Adrenal gland (tissue), 19 donors: ENCODE measurements at regions of chr4 and their contacts with region 1.

Region 1: DNA sequence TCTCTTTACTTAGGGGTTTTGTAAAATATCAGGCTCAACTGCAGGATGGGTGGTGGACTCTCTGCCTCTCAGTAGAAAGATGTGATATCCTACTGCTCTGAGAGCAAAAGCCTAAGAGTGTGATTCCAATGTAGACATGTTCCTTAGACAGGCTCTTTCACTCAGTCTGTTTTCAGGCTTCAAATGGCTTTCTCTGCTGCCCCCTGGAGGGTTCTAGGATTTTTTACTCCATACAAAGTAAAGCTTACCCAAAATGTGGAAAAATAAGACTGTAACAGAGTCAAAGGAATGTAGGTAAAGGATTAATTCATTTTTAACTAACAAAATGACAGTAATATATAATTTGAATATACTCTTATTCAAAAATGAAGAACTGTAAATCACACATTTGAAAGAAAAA is 32.1 kb downstream of the ZGRF1 start:
- DNase-seq: peak; percentile 33 to 75 (median 56)
- H3K4me3 ChIP-seq: no peak overlapping the region
- H3K27ac ChIP-seq: no peak overlapping the region
- H3K4me1 ChIP-seq: no peaks in the 10 kb centered on the region
- H3K27me3 ChIP-seq: no peaks in the 10 kb centered on the region
- CTCF ChIP-seq: peak; percentile 40 to 66 (median 49)
- POLR2A ChIP-seq: no peak

Region 2: GRCh38 chr4:112327965-112328733 is 276.4 kb before region 1 on chr4:
- intact Hi-C with region 1: loop called (anchors 5 to 10 kb)
- DNase-seq: no peak
- H3K4me3 ChIP-seq: no peak overlapping the region
- H3K27ac ChIP-seq: no peak overlapping the region
- H3K4me1 ChIP-seq: no peaks in the 10 kb centered on the region
- H3K27me3 ChIP-seq: no peaks in the 10 kb centered on the region
- CTCF ChIP-seq: peak in 5 of 6 experiments; percentile 13 to 54 (median 48)
- POLR2A ChIP-seq: no peak

Region 3: DNA sequence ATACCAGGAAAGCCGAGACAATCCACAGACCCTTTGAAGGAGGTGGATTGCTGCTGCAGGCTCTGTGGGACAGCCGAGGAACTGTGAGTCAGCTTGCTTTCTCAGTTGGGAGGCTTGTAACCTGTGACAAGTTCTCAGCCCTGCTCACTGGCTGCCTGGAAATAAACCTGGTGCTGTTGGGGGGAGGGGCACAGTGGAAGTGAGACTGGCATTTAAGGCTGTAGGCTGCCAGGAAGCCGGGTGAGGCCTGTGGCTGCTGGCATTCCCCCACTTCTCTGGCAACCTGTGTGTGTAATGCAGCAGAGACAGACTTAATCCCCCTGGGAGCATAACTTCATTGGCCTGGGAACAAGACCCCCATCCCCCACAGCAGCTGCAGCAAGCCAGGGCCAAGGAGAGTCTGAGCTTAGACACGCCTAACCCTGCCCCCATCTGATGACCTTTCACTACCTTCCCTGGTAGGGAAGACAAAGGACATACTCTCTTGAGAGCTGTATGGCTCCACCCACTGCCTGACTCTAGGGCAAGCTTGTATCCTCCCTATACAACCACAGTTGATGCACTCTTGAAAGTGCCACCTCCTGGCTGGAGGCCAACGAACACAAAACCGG is 243.3 kb before region 1 on chr4:
- intact Hi-C with region 1: no loop called
- DNase-seq: no peak
- H3K4me3 ChIP-seq: no peak overlapping the region
- H3K27ac ChIP-seq: no peak overlapping the region
- H3K4me1 ChIP-seq: no peaks in the 10 kb centered on the region
- H3K27me3 ChIP-seq: no peaks in the 10 kb centered on the region
- CTCF ChIP-seq: no peak
- POLR2A ChIP-seq: no peak

Region 4: DNA sequence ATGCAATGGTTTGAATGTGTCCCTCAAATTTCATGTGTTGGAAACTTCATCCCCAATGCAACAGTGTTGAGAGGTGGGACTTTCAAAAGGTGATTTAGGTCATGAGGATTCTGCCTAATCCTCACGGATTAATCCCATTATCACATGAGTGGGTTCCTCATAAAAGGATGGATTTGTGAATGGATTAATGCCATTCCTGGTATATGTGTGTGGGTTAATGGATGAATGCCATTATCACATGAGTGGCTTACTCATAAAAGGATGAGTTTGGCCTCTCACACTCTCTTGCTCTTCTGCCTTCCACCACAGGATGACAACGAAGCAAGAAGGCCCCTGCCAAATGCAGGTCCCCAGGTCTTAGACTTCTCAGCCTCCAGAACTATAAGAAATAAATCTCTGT is 58.1 kb before region 1 on chr4:
- intact Hi-C with region 1: no loop called
- DNase-seq: no peak
- H3K4me3 ChIP-seq: no peak overlapping the region
- H3K27ac ChIP-seq: no peak overlapping the region
- H3K4me1 ChIP-seq: no peaks in the 10 kb centered on the region
- H3K27me3 ChIP-seq: no peaks in the 10 kb centered on the region
- CTCF ChIP-seq: no peak
- POLR2A ChIP-seq: no peak

Region 5: DNA sequence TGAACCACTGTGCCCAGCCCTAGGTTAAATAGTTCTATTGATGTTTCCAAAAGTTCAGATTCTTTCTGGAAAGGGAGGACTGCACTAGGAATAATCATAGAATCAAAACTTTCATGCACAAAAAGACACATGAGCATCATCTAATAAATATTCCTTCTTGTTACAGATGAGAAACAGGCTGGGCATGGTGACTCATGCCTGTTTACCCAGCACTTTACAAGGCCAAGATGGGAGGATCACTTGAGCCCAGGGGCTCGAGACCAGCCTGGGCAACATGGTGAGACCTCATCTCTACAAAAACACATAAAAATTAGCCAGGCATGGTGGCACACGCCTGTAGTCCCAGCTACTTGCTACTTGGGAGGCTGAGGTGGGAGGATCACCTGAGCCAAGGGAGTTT is 60.0 kb after region 1 on chr4:
- intact Hi-C with region 1: no loop called
- DNase-seq: no peak
- H3K4me3 ChIP-seq: no peak overlapping the region
- H3K27ac ChIP-seq: no peak overlapping the region
- H3K4me1 ChIP-seq: no peaks in the 10 kb centered on the region
- H3K27me3 ChIP-seq: no peaks in the 10 kb centered on the region
- CTCF ChIP-seq: no peak
- POLR2A ChIP-seq: no peak